B cell (primary cell): ENCODE measurements at regions of chr11 and their contacts with region 1.

Region 1: GRCh38 chr11:66222358-66223149 is 45.9 kb upstream of the RAB1B start:
- DNase-seq: peak; percentile 98
- ATAC-seq: peak; percentile 98
- H3K4me3 ChIP-seq: no peak overlapping the region
- H3K4me3 Mint-ChIP-seq: peak overlapping the region; percentile 6
- H3K27ac ChIP-seq: peak overlapping the region; percentile 94 to 95
- H3K27ac Mint-ChIP-seq: peak overlapping the region; percentile 91
- H3K4me1 ChIP-seq: peaks cover 10 to 14% of the 10 kb centered on the region in 2 donors
- H3K4me1 Mint-ChIP-seq: peaks cover 16% of the 10 kb centered on the region
- H3K27me3 ChIP-seq: no peaks in the 10 kb centered on the region
- H3K27me3 Mint-ChIP-seq: no peaks in the 10 kb centered on the region
- CTCF ChIP-seq: peak; percentile 99

Region 2: GRCh38 chr11:66062408-66062807 is 160.1 kb before region 1 on chr11:
- CTCF ChIA-PET with region 1: no interaction called
- POLR2A ChIA-PET with region 1: no interaction called
- intact Hi-C with region 1: no loop called
- DNase-seq: no peak
- ATAC-seq: no peak
- H3K4me3 ChIP-seq: no peak overlapping the region
- H3K4me3 Mint-ChIP-seq: no peak overlapping the region
- H3K27ac ChIP-seq: no peak overlapping the region
- H3K27ac Mint-ChIP-seq: no peak overlapping the region
- H3K4me1 ChIP-seq: peaks cover 9 to 16% of the 10 kb centered on the region in 2 donors
- H3K4me1 Mint-ChIP-seq: peaks cover 33% of the 10 kb centered on the region
- H3K27me3 ChIP-seq: no peaks in the 10 kb centered on the region
- H3K27me3 Mint-ChIP-seq: no peaks in the 10 kb centered on the region
- CTCF ChIP-seq: no peak

Region 3: DNA sequence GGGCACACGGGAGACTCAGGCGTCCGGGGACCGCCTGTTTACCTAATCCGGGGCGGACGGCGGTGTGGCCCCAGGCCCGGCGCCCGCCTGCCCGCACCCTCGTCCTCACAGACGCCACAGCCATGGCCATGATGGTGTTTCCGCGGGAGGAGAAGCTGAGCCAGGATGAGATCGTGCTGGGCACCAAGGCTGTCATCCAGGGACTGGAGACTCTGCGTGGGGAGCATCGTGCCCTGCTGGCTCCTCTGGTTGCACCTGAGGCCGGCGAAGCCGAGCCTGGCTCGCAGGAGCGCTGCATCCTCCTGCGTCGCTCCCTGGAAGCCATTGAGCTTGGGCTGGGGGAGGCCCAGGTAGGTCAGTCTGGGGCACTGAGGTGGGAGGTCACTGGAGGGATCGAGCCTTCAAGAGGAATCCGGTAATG is 35.9 kb after region 1 on chr11:
- CTCF ChIA-PET with region 1: interaction called, 3 read pairs
- POLR2A ChIA-PET with region 1: interaction called, 3 read pairs
- intact Hi-C with region 1: loop called (anchors 1 kb)
- DNase-seq: no peak
- ATAC-seq: no peak
- H3K4me3 ChIP-seq: peak overlapping the region in 4 of 5 experiments; percentile 87 to 99 (median 96)
- H3K4me3 Mint-ChIP-seq: peak overlapping the region; percentile 98
- H3K27ac ChIP-seq: peak overlapping the region; percentile 85
- H3K27ac Mint-ChIP-seq: peak overlapping the region; percentile 98
- H3K4me1 ChIP-seq: peaks cover 13 to 18% of the 10 kb centered on the region in 2 donors
- H3K4me1 Mint-ChIP-seq: peaks cover 25% of the 10 kb centered on the region
- H3K27me3 ChIP-seq: no peaks in the 10 kb centered on the region
- H3K27me3 Mint-ChIP-seq: no peaks in the 10 kb centered on the region
- CTCF ChIP-seq: peak; percentile 40

Region 4: DNA sequence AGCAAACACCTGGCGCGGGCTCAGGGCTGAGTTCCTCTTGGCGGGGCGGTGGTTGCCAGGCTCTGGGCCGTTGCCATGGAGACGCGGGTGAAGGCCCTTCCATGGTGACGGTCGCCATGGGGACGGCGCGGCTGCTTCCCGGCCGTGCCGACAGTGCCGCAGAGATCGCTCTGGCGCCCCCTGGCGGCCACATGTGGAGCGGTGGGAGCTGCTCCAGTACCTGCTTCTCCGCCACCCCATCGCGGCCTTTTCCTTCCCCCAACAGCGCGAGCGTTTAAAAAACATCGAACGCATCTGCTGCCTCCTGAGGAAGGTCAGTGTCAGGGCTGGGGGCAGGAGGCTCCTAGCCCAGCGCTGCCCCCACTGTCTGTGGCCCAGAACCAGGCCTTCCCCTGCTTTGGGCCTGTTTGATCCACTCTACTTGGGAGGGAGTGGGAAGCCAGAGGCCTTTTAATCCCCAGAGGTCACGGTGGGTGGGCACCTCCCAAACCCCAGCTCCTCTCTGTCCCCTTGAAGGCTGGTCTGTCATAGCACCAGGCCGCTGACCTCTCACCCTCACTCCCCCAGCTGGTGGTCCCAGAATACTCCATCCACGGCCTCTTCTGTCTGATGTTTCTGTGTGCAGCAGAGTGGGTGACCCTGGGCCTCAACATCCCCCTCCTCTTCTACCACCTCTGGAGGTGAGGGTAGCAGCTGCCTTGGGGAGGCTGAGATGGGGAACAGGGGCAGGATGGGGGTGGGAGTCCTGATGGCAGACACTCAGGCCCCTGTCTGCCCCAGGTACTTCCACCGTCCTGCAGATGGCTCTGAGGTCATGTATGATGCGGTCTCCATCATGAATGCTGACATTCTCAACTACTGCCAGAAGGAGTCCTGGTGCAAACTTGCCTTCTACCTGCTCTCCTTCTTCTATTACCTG is 60.2 kb after region 1 on chr11:
- CTCF ChIA-PET with region 1: interaction called, 31 read pairs
- POLR2A ChIA-PET with region 1: no interaction called
- intact Hi-C with region 1: loop called (anchors 1 kb)
- DNase-seq: peak; percentile 100
- ATAC-seq: peak; percentile 78
- H3K4me3 ChIP-seq: no peak overlapping the region
- H3K4me3 Mint-ChIP-seq: peak overlapping the region; percentile 60
- H3K27ac ChIP-seq: peak overlapping the region; percentile 59 to 80
- H3K27ac Mint-ChIP-seq: peak overlapping the region; percentile 95
- H3K4me1 ChIP-seq: peaks cover 22 to 36% of the 10 kb centered on the region in 2 donors
- H3K4me1 Mint-ChIP-seq: peaks cover 38% of the 10 kb centered on the region
- H3K27me3 ChIP-seq: peaks cover 0 to 16% (median 3%) of the 10 kb centered on the region in 4 experiments
- H3K27me3 Mint-ChIP-seq: peaks cover 3% of the 10 kb centered on the region
- CTCF ChIP-seq: peak; percentile 88

Region 5: DNA sequence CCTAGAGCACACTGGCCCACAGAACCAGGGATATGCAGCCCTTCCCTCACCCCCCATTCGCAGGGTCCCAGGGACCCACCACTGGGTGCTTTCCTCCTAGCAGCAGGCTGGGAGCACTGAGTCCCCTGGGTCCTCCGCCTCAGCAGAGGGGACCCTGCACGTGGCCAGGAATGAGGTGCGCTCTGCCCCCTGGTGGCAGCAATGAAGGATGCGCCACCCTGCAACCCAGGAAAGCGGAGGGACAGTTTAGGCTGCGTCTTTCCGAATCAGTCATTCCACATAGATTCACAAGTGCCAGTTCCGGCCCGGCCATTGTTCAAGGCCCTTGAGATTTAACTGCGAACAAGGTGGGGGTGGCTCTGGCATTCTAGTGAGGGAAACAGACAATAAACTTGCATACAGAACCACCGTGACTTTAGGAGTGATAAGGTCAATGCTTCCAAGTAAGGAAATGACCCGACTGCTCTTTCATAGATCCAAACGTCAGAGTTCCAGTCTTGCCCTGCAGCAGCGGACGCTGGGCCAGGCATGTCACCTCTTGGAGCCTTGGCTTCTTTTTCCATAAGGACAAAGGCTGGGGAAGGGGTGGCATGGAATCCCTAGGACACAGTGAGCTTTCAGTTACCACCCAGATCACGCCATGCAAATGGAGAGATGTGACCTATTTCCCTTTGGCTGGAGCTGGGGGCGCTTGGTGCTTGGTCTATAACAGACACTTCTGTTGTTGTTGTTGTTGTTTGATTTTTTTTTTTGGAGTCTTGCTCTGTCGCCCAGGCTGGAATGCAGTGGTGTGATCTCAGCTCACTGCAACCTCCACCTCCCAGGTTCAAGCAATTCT is 106.0 kb after region 1 on chr11:
- CTCF ChIA-PET with region 1: no interaction called
- POLR2A ChIA-PET with region 1: no interaction called
- intact Hi-C with region 1: loop called (anchors 1 kb)
- DNase-seq: peak; percentile 89
- ATAC-seq: peak; percentile 98
- H3K4me3 ChIP-seq: peak overlapping the region in 1 of 5 experiments; percentile 30
- H3K4me3 Mint-ChIP-seq: peak overlapping the region; percentile 52
- H3K27ac ChIP-seq: no peak overlapping the region
- H3K27ac Mint-ChIP-seq: peak overlapping the region; percentile 47
- H3K4me1 ChIP-seq: peaks cover 15 to 25% of the 10 kb centered on the region in 2 donors
- H3K4me1 Mint-ChIP-seq: peaks cover 16% of the 10 kb centered on the region
- H3K27me3 ChIP-seq: no peaks in the 10 kb centered on the region
- H3K27me3 Mint-ChIP-seq: no peaks in the 10 kb centered on the region
- CTCF ChIP-seq: peak; percentile 93